HEK293 (cell line): ENCODE measurements at regions of chr11 and their contacts with region 1.

Region 1: DNA sequence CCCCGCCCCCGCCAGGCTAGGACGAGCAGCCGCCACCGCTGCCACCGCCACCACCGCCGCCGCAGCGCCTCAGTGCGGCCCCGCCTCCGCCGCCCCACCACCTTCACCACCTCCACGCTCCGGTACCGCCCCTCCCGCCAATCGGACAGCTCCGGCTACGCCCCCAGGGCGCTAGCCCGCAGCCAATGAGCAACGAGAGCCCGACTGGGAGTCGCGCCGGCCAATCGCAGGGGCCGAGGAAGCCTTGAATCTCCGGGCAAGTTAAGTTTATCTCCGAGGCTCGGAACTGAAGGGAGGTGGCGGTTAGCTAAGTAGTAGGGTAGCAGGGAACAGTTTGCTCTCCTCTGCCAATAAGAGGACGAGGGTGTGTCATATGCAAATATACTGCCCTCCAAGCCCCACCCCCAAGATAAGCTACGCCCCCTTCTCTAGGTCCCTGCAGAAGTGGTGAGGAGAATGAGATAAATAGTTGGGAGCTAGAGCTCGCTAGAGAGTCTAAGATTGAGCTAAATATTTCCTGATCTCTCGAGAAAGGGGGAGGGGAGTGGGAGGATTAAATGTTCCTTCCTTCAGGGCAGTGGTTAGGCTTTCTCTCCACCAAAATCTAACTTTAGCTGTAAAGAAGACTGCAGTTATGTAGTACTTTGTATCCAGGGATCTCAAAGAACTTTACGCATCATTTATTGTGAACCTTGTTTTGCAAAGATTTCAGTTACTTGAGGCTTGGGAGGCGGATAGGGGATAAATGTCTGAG is at the start of gene SESN3:
- H3K4me3 ChIP-seq: peak within 1 kb of the TSS; percentile 82
- H3K27ac ChIP-seq: peak within 1 kb of the TSS; percentile 87
- H3K4me1 ChIP-seq: peaks cover 6% of the 10 kb centered on the region
- CTCF ChIP-seq: no peak

Region 2: DNA sequence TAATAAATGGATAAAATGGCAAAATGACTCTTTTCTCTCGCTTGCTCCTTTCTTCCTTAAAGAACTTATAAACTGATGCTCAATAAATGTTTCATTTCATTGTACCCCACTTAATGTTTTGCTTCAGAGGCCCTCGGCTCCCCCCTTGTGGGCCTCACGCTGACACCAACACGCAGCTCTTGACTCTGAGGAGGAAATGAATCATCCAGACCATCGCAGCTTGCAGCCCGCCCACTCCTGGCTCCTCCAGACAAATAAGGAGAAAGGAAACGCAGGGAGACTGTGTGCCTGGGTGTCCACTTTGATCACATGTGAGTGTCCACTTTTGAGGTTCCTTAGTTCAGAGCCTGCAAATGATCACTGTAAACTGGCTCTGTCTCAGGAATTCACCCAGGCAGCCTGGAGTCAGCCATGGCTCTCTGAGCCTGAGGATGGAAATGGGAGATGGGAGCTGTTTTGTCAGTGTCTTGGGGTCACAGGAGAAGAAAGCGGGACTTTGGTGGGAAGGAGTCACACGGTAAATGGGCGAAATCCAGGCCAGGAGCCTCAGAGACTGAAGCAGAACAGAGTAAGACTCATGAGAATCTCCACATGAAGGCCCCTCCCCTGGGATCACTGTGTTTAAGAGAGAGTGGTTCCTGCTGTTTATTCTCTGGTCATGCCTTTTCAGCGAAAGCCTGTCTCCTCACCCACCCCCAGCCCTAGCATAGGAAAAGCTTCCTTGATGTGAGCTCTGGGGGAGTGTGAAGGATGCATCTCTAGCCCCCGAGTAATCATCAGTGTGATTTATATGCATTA is 354.5 kb before region 1 on chr11:
- CTCF ChIA-PET with region 1: no interaction called
- POLR2A ChIA-PET with region 1: no interaction called
- H3K4me3 ChIP-seq: no peak overlapping the region
- H3K27ac ChIP-seq: no peak overlapping the region
- H3K4me1 ChIP-seq: no peaks in the 10 kb centered on the region
- CTCF ChIP-seq: no peak

Region 3: GRCh38 chr11:95150946-95151684 is 80.2 kb before region 1 on chr11:
- CTCF ChIA-PET with region 1: interaction called, 10 read pairs
- POLR2A ChIA-PET with region 1: interaction called, 3 read pairs
- H3K4me3 ChIP-seq: peak overlapping the region; percentile 24
- H3K27ac ChIP-seq: no peak overlapping the region; the same call in 1 of the 2 replicates
- H3K4me1 ChIP-seq: no peaks in the 10 kb centered on the region; the same call in none of the 2 replicates
- CTCF ChIP-seq: peak; percentile 62; the same call in 1 of the 2 replicates

Region 4: DNA sequence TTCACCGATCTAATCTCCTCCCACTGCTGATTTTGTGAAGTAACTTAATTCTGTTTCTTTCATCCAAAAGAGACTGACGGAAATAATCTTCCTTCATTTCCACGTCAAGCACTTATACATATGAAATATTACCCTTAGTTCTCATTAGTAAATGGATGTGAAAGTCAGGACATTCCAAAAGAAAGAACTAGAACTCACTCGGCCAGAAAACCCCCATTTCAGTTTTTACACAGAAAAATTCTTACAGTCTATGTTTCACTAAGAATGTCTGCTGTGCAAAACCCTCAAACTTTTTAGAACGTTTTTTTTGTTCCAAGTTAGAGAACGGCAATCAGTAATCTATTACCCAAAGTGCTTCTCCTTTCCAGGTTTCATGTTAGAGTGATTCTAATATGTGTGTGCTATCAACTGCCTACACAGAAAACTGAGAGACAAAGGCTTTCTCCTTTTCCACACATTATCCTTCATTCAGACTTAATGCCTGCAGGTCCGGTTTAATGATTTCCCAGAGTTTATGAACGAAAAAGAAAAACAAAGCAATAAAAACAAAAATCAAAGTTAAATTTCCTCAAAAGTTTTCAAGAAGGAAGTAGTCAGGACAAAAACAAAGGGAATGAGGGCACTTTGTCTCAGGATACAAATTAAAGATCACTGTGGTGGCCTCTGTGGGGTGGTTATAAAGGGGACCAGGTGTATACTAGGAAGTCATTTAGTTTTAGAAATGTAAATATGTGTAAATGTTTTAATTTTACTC is 11.0 kb after region 1 on chr11:
- CTCF ChIA-PET with region 1: interaction called, 10 read pairs
- POLR2A ChIA-PET with region 1: interaction called, 23 read pairs
- H3K4me3 ChIP-seq: no peak overlapping the region
- H3K27ac ChIP-seq: no peak overlapping the region
- H3K4me1 ChIP-seq: peaks cover 7% of the 10 kb centered on the region; the same call in 1 of the 2 replicates
- CTCF ChIP-seq: no peak

Region 5: DNA sequence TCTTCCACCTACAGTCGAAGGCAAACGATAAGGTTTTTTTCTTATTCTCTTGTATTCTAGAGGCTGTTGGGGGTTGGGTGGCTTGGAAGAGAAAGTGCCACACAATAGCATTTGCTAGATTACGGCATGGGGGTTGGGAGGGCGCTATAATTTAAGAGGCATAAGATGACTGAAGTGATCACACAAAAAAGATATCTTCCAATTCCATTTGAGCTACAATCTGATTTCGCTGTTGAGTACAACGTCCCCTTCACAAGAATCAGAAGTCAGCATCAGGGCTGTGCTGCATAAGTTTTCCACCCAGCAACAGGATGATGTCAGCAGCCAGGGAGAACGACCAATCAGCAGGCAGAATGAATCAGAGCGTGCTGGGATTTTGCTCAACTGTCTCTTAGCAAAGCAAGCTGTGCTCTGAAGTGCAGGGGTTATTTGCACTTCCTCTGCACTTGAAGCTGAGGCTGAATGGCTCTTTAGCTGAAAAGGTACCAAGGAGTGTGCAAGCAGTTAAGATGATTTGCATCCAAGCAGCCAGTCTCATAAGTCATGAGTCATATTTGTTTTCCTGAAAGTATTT is 22.9 kb after region 1 on chr11:
- CTCF ChIA-PET with region 1: interaction called, 4 read pairs
- POLR2A ChIA-PET with region 1: interaction called, 13 read pairs
- H3K4me3 ChIP-seq: peak overlapping the region; percentile 19
- H3K27ac ChIP-seq: peak overlapping the region; percentile 29; the same call in 1 of the 2 replicates
- H3K4me1 ChIP-seq: peaks cover 14% of the 10 kb centered on the region
- CTCF ChIP-seq: no peak

Region 6: GRCh38 chr11:95299078-95299679 is 67.9 kb after region 1 on chr11:
- CTCF ChIA-PET with region 1: no interaction called
- POLR2A ChIA-PET with region 1: interaction called, 14 read pairs
- H3K4me3 ChIP-seq: no peak overlapping the region
- H3K27ac ChIP-seq: peak overlapping the region; percentile 53
- H3K4me1 ChIP-seq: peaks cover 12% of the 10 kb centered on the region
- CTCF ChIP-seq: no peak

Region 7: GRCh38 chr11:95429376-95429907 is 198.1 kb after region 1 on chr11:
- CTCF ChIA-PET with region 1: no interaction called
- POLR2A ChIA-PET with region 1: no interaction called
- H3K4me3 ChIP-seq: no peak overlapping the region
- H3K27ac ChIP-seq: no peak overlapping the region
- H3K4me1 ChIP-seq: no peaks in the 10 kb centered on the region
- CTCF ChIP-seq: no peak

Region 8: GRCh38 chr11:95790123-95790932 is 559.0 kb after region 1 on chr11 and contains the start of gene CEP57:
- CTCF ChIA-PET with region 1: no interaction called
- POLR2A ChIA-PET with region 1: interaction called, 13 read pairs
- H3K4me3 ChIP-seq: peak within 1 kb of the TSS; percentile 99
- H3K27ac ChIP-seq: peak within 1 kb of the TSS; percentile 80
- H3K4me1 ChIP-seq: no peaks in the 10 kb centered on the region
- CTCF ChIP-seq: no peak